ENCODE measurements at regions of chr2 and their contacts with region 1.

Region 1: DNA sequence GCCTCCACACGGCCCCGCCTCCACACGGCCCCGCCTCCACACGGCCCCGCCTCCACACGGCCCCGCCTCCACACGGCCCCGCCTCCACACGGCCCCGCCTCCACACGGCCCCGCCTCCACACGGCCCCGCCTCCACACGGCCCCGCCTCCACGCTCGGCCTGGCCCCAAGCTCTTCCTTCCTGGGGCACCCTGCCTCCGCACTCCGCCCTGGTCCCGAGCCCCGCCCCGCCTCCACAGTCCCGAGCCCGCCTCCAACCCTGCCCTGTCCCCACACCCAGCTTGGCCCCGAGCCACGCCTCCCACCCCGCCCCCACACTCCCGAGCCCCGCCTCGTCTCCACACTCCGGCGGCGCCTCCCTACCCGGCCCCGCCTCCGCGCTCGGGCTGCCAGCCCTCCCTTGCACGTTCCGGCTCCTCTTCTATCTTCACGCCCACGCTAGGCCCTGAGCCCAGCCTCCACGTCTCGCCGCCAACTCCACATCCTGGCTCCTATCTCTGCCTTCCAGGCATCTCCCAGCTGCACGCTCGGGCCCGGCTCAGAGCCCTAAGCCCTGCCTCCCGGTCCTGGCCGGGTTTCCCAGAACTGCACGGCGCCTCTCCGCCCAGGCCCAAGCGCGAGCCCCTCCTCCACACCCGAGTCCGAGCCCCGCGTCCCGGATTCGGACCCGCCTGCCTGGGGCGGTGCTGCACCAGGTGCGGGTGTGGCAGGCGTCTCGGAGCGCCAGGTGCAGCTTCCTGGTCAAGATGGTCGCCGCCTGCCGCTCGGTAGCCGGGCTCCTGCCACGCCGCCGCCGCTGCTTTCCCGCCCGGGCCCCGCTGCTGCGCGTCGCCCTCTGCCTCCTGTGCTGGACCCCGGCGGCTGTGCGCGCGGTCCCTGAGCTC is at the start of gene TMEM87B:
- DNase-seq: peak; percentile 94
- H3K4me3 ChIP-seq: peak within 1 kb of the TSS; percentile 82
- H3K27ac ChIP-seq: peak within 1 kb of the TSS; percentile 77
- H3K4me1 ChIP-seq: peaks cover 35% of the 10 kb centered on the region
- CTCF ChIP-seq: no peak
- total RNA-seq, gene TMEM87B: 9.1 and 13.9 TPM in 2 replicates

Region 2: GRCh38 chr2:112156152-112156986 is 101.3 kb after region 1 on chr2:
- CTCF ChIA-PET with region 1: no interaction called
- POLR2A ChIA-PET with region 1: no interaction called
- intact Hi-C with region 1: loop called (anchors 5 kb)
- DNase-seq: no peak
- H3K4me3 ChIP-seq: no peak overlapping the region
- H3K27ac ChIP-seq: no peak overlapping the region
- H3K4me1 ChIP-seq: peaks cover 38% of the 10 kb centered on the region
- CTCF ChIP-seq: no peak

Region 3: GRCh38 chr2:112254466-112255239 is 199.6 kb after region 1 on chr2 and contains the start of gene ZC3H8:
- CTCF ChIA-PET with region 1: no interaction called
- POLR2A ChIA-PET with region 1: interaction called, 4 read pairs
- intact Hi-C with region 1: loop called (anchors 5 kb)
- DNase-seq: peak; percentile 93
- H3K4me3 ChIP-seq: peak within 1 kb of the TSS; percentile 83
- H3K27ac ChIP-seq: peak within 1 kb of the TSS; percentile 70
- H3K4me1 ChIP-seq: peaks cover 21% of the 10 kb centered on the region
- CTCF ChIP-seq: peak; percentile 45
- total RNA-seq, gene ZC3H8: 12.3 and 15.0 TPM in 2 replicates

Region 4: DNA sequence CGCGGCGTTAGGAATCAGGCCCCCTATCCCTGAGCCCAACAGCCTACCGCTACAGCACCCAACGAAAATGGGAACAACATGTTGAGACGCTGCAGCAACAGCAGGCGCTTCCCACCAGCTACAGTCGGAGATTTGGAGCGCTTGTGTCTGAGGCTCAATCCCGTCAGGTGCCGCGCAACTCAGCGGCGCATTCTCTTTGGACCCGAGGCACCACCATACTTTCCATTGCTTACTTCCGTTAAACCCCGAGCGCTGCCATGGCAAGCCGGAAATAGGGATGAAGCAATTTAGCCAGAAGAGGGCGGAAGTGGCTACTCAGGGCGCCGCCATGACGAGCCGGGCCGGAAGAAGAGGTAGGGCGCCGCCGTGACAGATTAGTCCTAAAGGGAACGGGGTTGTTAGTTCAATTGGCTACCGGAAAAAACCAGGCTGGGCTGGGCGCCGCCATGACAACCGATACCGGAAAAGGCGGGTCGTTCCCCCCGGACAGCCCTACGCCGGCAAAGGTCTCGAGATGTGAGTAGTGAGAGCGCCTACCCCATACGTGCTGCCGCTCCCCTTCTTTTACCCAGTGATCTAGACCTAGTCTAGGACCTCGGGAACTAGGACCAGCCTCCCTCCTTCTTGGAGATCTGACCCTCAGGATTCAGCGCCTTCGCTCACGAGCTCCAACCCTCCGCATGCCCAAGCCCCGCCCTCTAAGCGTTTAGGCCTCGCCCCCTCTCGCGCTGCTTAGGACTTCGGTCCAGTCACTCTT is 529.2 kb after region 1 on chr2 and contains the start of gene CHCHD5:
- CTCF ChIA-PET with region 1: no interaction called
- POLR2A ChIA-PET with region 1: interaction called, 3 read pairs
- intact Hi-C with region 1: loop called (anchors 2 kb)
- DNase-seq: peak; percentile 95
- H3K4me3 ChIP-seq: peak within 1 kb of the TSS; percentile 75
- H3K27ac ChIP-seq: peak within 1 kb of the TSS; percentile 76
- H3K4me1 ChIP-seq: peaks cover 27% of the 10 kb centered on the region
- CTCF ChIP-seq: no peak
- total RNA-seq, gene CHCHD5: 22.3 and 22.5 TPM in 2 replicates

Region 5: DNA sequence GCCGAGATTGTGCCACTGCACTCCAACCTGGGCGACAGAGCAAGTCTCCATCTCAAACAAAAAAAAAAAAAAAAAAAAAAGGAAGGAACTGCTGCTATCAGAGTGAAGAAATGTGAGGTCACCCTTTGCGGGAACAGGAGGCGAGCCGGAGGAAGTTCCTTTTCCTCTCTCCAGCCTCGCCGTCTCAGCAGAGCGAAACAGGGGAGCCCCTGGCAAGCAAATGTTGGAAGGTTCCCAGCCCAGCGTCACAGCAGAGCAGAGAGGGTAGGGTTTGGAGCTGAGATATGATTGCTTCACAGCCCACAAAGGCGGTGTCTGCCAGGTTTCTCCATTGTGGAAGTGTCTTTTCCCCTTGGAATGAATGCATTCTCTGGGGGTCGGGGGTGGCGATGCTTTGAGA is 619.1 kb after region 1 on chr2:
- CTCF ChIA-PET with region 1: no interaction called
- POLR2A ChIA-PET with region 1: no interaction called
- intact Hi-C with region 1: no loop called
- DNase-seq: no peak
- H3K4me3 ChIP-seq: no peak overlapping the region
- H3K27ac ChIP-seq: no peak overlapping the region
- H3K4me1 ChIP-seq: no peaks in the 10 kb centered on the region
- CTCF ChIP-seq: no peak

Measured in OCI-LY7 (cell line).